ENCODE measurements at regions of chr14 and their contacts with region 1.

Region 1: GRCh38 chr14:63470962-63471793 is 72.0 kb downstream of the PPP2R5E start:
- DNase-seq: no peak
- H3K4me3 Mint-ChIP-seq: peak overlapping the region; percentile 26
- H3K27ac Mint-ChIP-seq: peak overlapping the region; percentile 59
- H3K4me1 Mint-ChIP-seq: peaks cover 40% of the 10 kb centered on the region
- H3K27me3 Mint-ChIP-seq: no peaks in the 10 kb centered on the region

Region 2: GRCh38 chr14:63737582-63738006 is 266.4 kb after region 1 on chr14:
- intact Hi-C with region 1: loop called (anchors 10 kb)
- DNase-seq: no peak
- H3K4me3 Mint-ChIP-seq: peak overlapping the region; percentile 54
- H3K27ac Mint-ChIP-seq: peak overlapping the region; percentile 52
- H3K4me1 Mint-ChIP-seq: peaks cover 12% of the 10 kb centered on the region
- H3K27me3 Mint-ChIP-seq: peaks cover 3% of the 10 kb centered on the region

Region 3: DNA sequence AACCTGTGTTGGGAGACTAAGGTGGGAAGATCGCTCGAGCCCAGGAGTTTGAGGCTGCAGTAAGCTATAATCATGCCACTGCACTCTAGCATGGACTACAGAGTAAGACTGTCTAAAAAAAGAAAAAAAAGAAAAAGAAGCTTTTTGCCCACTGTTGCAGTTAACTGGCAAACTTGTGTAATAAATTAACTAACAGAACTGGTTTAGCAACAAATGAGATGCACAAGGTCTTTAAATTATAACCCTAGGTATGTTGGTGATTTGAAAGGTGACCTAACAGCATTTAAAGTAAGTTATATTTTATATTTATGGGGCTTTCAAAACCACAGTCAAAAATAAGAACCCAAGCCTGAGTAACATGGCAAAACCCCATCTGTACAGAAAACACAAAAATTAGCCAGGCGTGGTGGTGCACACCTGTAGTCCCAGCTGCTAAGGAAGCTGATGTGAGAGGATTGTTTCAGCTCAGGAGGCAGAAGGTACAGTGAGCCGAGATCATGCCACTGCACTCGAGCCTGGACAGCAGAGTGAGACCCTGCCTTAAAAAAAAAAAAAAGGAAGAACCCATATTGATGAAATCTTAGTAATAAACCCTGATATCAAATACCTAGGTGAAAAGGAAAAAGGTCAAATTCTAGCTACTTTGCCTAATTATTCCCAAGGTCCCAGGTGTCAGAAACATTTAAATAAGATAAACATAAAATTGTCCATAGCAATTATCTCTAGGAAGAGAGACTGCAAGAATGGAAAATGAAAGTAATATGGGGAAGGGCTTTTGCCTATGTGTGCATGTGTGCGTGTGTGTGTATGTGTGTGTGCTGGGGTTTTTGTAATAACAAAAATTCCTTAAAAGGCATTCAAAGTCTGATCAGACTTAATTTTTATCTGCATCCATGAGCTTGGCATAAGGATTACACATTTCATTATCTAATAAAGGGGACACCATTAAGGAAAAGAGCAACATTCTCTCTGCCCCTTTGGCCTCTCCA is 397.0 kb after region 1 on chr14:
- intact Hi-C with region 1: loop called (anchors 10 kb)
- DNase-seq: no peak
- H3K4me3 Mint-ChIP-seq: peak overlapping the region; percentile 15
- H3K27ac Mint-ChIP-seq: no peak overlapping the region
- H3K4me1 Mint-ChIP-seq: peaks cover 44% of the 10 kb centered on the region
- H3K27me3 Mint-ChIP-seq: peaks cover 8% of the 10 kb centered on the region